Adrenal gland (tissue), 19 donors: ENCODE measurements at regions of chr10 and their contacts with region 1.

Region 1: DNA sequence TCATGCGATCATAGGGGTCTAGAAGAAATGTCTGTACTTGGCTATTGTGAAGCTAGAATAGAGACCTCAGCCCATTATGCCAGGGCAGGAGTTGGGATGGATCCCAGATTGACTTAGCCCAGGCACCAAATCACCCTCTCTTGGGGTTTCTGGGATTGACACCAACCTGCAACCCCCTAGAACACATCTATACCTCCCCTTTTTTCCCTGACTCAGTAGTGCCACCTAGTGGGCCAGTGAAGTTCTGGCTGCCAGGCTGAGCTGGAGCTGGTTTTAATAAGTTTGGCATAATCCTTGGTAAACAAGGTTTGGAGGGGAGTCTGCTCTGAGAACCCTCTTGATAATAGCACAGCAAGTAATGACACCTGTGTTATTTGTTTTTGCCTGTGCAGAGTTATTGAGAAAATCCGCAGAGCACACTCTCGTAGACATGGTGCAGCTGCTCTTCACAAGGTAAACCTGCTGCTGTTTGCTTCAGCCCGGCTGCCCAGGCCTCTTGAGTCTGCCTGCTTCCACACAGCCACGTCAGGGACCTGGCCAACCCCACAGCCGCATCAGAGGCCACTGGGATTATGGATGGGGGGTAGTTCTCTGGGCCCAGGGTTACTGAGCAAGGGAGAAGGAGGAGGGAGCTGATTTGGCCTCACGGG is 43.3 kb upstream of the NFKB2 start:
- DNase-seq: peak; percentile 37 to 71 (median 56)
- H3K4me3 ChIP-seq: no peak overlapping the region
- H3K27ac ChIP-seq: no peak overlapping the region
- H3K4me1 ChIP-seq: no peaks in the 10 kb centered on the region
- H3K27me3 ChIP-seq: no peaks in the 10 kb centered on the region
- CTCF ChIP-seq: peak; percentile 77 to 91 (median 82)
- POLR2A ChIP-seq: no peak

Region 2: DNA sequence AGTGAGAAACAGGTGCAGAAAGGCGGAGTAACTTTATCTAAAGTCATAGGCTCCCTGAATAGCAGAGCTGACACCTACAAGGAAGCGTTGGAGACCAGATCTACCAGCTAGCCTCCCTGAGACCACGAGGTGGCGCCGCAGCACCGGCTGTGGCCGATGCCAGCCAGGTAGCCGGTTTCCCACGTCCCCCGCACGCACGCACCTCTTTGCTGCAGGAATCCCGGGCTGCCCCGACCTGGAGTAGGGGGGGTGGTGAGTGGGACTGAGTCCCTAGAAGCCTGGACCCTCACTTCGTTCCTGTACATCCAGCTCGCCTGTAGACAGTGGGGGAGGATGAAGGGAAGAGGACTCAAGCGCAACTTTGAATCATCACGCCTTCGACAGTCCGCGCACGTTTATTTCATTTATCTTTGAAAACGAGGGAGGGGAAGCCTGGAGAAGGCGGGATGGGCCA is 122.4 kb before region 1 on chr10:
- intact Hi-C with region 1: loop called (anchors 2 kb)
- DNase-seq: peak; percentile 73 to 91 (median 86)
- H3K4me3 ChIP-seq: peak overlapping the region in 1 of 4 donors; percentile 72
- H3K27ac ChIP-seq: no peak overlapping the region
- H3K4me1 ChIP-seq: peaks cover 24 to 25% of the 10 kb centered on the region in 2 donors
- H3K27me3 ChIP-seq: peaks cover 14% of the 10 kb centered on the region
- CTCF ChIP-seq: peak; percentile 83 to 98 (median 96)
- POLR2A ChIP-seq: no peak

Region 3: GRCh38 chr10:102461187-102462054 is 109.2 kb after region 1 on chr10:
- intact Hi-C with region 1: no loop called
- DNase-seq: peak; percentile 92 to 97 (median 96)
- H3K4me3 ChIP-seq: peak overlapping the region in 3 of 4 donors; percentile 29 to 58 (median 57)
- H3K27ac ChIP-seq: no peak overlapping the region
- H3K4me1 ChIP-seq: peaks cover 0 to 10% of the 10 kb centered on the region in 2 donors
- H3K27me3 ChIP-seq: no peaks in the 10 kb centered on the region
- CTCF ChIP-seq: no peak
- POLR2A ChIP-seq: peak; percentile 50 to 55